H1 (cell line): ENCODE measurements at regions of chr5 and their contacts with region 1.

Region 1: GRCh38 chr5:150656191-150657132 is 4.6 kb upstream of the MYOZ3 start:
- DNase-seq: peak in 1 of 2 experiments; percentile 94
- H3K4me3 ChIP-seq: peak overlapping the region; percentile 44 to 78 (median 46)
- H3K27ac ChIP-seq: no peak overlapping the region; the same call in 1 of the 2 replicates
- H3K4me1 ChIP-seq: peaks cover 0 to 11% (median 3%) of the 10 kb centered on the region in 4 experiments; a peak in 4 of 7 replicates
- H3K27me3 ChIP-seq: no peaks in the 10 kb centered on the region; a peak in 1 of 7 replicates
- CTCF ChIP-seq: peak in 2 of 3 experiments; percentile 57 to 82; a peak in 3 of 4 replicates
- EP300 ChIP-seq: no peak
- POLR2A ChIP-seq: peak in 1 of 2 experiments; percentile 60; a peak in 2 of 3 replicates
- RAD21 ChIP-seq: peak; percentile 71 to 79

Region 2: DNA sequence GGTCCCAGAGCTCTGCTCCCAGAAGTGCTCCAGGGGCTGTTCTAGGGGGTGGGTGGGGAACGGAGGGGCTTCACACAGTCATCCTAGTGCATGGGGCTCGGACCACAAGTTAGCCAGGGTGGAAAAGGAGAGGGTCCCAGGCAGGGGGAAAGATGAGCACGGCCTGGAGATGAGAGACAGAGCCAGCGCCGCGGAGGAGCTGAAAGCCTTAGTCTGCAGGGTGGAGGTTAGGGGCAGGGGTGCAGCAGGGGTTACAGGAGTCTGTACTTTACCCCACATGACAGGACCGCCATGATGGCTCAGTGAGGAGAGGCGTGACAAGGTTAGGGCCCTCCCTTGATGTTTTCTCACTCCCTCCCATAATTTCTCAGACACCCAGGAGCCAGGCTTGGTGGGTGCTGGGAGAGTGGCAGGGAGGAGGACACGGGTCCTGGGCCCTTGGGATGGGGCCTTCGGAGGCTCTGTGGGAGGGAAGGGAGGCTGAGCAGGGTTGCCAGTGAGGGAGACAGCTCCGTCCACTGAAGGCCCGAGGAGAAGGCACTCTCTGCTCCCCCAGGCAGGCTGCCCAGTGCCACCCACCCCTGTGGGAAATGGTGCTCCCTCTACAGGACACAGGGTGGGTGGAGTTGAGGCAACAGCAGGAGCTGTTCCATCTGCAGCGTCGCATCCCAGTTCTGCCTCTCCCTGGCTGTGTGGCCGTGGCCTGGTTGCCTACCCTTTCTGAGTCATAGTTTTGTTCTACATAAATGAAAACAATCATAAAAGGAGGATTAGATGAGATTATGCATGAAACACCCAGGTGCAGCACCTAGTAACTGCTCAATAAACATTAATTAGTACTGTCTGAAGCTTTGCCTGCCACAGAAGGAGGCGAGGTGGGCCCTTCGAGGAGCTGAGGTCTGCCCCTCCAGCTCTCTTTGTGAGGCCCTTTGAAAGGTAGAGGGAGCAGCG is 82.3 kb before region 1 on chr5:
- CTCF ChIA-PET with region 1: interaction called, 28 read pairs
- POLR2A ChIA-PET with region 1: no interaction called
- DNase-seq: no peak
- H3K4me3 ChIP-seq: no peak overlapping the region
- H3K27ac ChIP-seq: no peak overlapping the region
- H3K4me1 ChIP-seq: no peaks in the 10 kb centered on the region
- H3K27me3 ChIP-seq: no peaks in the 10 kb centered on the region
- CTCF ChIP-seq: peak; percentile 22 to 60 (median 43)
- EP300 ChIP-seq: no peak
- POLR2A ChIP-seq: no peak
- RAD21 ChIP-seq: no peak; a peak in 1 of 4 replicates

Region 3: GRCh38 chr5:150582241-150583109 is 74.0 kb before region 1 on chr5:
- CTCF ChIA-PET with region 1: interaction called, 28 read pairs
- POLR2A ChIA-PET with region 1: no interaction called
- DNase-seq: no peak
- H3K4me3 ChIP-seq: no peak overlapping the region
- H3K27ac ChIP-seq: no peak overlapping the region
- H3K4me1 ChIP-seq: peaks cover 0 to 2% (median 0%) of the 10 kb centered on the region in 4 experiments; a peak in 1 of 7 replicates
- H3K27me3 ChIP-seq: no peaks in the 10 kb centered on the region
- CTCF ChIP-seq: no peak
- EP300 ChIP-seq: no peak
- POLR2A ChIP-seq: no peak
- RAD21 ChIP-seq: no peak

Region 4: GRCh38 chr5:150589871-150590601 is 66.4 kb before region 1 on chr5:
- CTCF ChIA-PET with region 1: interaction called, 25 read pairs
- POLR2A ChIA-PET with region 1: interaction called, 3 read pairs
- DNase-seq: peak in 1 of 2 experiments; percentile 17
- H3K4me3 ChIP-seq: no peak overlapping the region
- H3K27ac ChIP-seq: no peak overlapping the region
- H3K4me1 ChIP-seq: peaks cover 0 to 7% (median 5%) of the 10 kb centered on the region in 4 experiments; a peak in 6 of 7 replicates
- H3K27me3 ChIP-seq: no peaks in the 10 kb centered on the region
- CTCF ChIP-seq: peak; percentile 61 to 69 (median 63)
- EP300 ChIP-seq: no peak
- POLR2A ChIP-seq: no peak
- RAD21 ChIP-seq: peak; percentile 60 to 70

Region 5: GRCh38 chr5:150640311-150641005 is 16.0 kb before region 1 on chr5 and contains the start of gene SYNPO:
- CTCF ChIA-PET with region 1: interaction called, 247 read pairs
- POLR2A ChIA-PET with region 1: interaction called, 5 read pairs
- DNase-seq: no peak
- H3K4me3 ChIP-seq: no peak within 1 kb of the TSS
- H3K27ac ChIP-seq: no peak within 1 kb of the TSS
- H3K4me1 ChIP-seq: peaks cover 0 to 26% (median 15%) of the 10 kb centered on the region in 4 experiments; a peak in 6 of 7 replicates
- H3K27me3 ChIP-seq: no peaks in the 10 kb centered on the region
- CTCF ChIP-seq: no peak
- EP300 ChIP-seq: no peak
- POLR2A ChIP-seq: no peak
- RAD21 ChIP-seq: no peak
- total RNA-seq, gene SYNPO: 1.9 and 2.3 TPM in 2 replicates

Region 6: DNA sequence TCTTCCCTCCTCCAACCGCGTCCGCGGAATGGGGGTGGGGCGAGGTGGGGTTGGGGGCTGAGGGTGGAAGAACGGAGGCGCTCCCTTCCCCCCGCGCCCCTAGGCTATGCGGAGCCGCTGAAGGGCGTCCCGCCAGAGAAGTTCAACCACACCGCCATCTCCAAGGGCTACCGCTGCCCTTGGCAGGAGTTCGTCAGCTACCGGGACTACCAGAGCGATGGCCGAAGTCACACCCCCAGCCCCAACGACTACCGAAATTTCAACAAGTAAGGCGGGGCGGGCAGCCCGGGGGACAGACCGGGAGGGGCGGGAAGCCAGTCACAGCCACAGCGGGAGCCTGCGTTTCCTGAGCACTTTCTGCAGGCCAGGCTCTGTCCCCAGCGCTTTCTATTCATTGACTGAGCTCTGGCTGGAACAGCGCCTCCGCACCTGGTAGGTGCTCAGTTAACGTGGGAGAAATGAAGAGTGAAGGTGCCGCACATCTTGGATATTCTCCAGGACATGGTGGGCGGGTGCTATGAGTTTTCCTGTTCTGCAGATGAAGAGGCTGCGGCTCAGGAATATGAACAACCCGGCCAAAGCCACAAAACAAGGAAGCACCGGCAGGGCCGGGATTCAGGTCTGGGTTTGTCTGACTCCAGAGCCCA is 15.9 kb after region 1 on chr5:
- CTCF ChIA-PET with region 1: interaction called, 11 read pairs
- POLR2A ChIA-PET with region 1: interaction called, 70 read pairs
- DNase-seq: peak; percentile 58 to 84
- H3K4me3 ChIP-seq: peak overlapping the region; percentile 88 to 96 (median 93)
- H3K27ac ChIP-seq: peak overlapping the region; percentile 90
- H3K4me1 ChIP-seq: peaks cover 5 to 23% (median 14%) of the 10 kb centered on the region in 4 experiments
- H3K27me3 ChIP-seq: no peaks in the 10 kb centered on the region
- CTCF ChIP-seq: no peak
- EP300 ChIP-seq: no peak
- POLR2A ChIP-seq: peak in 1 of 2 experiments; percentile 52; a peak in 2 of 3 replicates
- RAD21 ChIP-seq: no peak